GM12878 (cell line): ENCODE measurements at regions of chr18 and their contacts with region 1.

Region 1: DNA sequence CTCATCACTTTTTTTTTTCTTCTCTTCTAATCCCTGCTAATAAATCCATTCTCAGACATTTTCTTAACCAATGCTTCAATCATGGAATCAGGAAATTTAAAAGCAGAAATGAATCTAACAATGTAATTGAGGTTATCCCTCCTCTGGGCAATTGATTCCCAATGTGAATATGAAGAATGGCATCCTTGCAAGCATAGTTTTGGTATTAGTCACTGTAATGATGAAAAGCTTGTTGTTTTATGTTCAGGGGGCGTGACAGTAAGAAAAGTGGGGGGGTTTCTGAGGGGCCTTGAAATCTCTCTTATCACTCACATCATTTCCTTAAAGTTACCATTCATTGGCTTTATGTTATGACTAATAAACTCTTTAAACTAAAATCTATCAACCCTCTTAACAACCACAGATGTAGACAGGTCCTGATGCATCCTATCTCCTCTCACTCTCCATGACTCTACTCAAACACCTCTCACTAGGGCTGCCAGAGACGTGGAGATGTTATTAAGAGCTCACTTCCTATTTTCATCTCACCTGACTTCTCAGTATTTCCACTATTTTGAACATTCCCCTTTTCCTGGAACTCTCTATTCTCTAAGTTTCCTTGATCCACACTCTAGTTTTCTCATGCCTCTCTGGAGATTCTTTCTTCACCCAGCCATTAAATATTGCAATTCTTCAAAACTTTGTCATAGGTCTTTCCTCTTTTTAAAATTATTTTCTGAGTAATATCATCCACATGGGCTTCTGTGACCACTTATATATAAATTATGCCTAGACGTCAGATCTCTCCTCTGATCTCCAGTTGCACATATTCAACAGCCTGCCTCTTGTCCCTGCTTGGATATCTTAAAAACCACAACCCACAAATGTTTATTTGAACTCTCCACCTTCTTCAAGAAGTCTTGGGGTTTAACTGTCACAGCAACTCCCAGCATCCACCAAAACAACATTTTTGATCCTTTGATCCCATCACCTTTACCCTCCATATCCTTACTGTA is 332.9 kb downstream of the CDH2 start:
- DNase-seq: no peak
- ATAC-seq: no peak
- H3K4me3 ChIP-seq: no peak overlapping the region
- H3K27ac ChIP-seq: no peak overlapping the region
- H3K4me1 ChIP-seq: no peaks in the 10 kb centered on the region
- H3K27me3 ChIP-seq: no peaks in the 10 kb centered on the region
- CTCF ChIP-seq: no peak
- EP300 ChIP-seq: no peak
- POLR2A ChIP-seq: no peak
- RAD21 ChIP-seq: no peak

Region 2: DNA sequence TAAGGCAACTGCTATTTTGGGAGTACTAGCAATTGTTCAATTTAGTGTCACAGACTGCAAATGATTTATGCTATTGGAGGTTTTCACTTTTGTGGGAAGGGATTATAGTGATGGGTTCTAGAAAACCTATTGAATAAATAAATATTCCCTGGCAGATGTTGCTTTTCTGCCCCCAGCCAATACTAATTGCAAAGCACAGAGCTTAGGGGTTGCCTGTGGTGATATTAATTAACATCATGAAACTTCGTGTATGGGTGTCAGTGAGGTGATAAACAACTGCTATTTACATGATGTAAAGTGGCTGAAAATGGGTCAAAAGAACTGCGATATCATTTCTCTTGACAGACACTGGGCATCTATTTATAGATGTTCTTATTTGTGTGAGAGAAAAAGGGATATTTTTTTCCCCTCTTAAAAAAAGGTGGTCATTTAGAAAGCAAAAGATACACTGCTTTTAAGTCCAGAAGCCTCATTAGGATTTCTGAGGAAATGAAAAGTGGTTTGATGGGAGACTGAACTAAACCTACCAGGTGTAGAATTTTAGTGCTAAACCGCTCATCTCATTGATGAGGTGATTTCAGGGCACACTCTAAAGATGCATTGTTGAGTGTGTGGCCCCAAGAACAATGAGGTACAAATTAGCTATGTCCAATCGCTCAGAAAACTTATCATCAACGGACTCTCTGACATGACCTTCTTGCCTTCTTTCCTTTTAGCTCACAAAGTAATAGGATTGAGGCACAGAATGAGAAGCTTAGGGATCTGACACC is 542.3 kb before region 1 on chr18:
- CTCF ChIA-PET with region 1: no interaction called
- POLR2A ChIA-PET with region 1: no interaction called
- RAD21 ChIA-PET with region 1: no interaction called
- SMC1A ChIA-PET with region 1: no interaction called
- in situ Hi-C with region 1: no loop called
- intact Hi-C with region 1: no loop called
- DNase-seq: no peak
- ATAC-seq: no peak
- H3K4me3 ChIP-seq: no peak overlapping the region
- H3K27ac ChIP-seq: no peak overlapping the region
- H3K4me1 ChIP-seq: no peaks in the 10 kb centered on the region
- H3K27me3 ChIP-seq: no peaks in the 10 kb centered on the region
- CTCF ChIP-seq: no peak
- EP300 ChIP-seq: no peak
- POLR2A ChIP-seq: no peak
- RAD21 ChIP-seq: no peak

Region 3: DNA sequence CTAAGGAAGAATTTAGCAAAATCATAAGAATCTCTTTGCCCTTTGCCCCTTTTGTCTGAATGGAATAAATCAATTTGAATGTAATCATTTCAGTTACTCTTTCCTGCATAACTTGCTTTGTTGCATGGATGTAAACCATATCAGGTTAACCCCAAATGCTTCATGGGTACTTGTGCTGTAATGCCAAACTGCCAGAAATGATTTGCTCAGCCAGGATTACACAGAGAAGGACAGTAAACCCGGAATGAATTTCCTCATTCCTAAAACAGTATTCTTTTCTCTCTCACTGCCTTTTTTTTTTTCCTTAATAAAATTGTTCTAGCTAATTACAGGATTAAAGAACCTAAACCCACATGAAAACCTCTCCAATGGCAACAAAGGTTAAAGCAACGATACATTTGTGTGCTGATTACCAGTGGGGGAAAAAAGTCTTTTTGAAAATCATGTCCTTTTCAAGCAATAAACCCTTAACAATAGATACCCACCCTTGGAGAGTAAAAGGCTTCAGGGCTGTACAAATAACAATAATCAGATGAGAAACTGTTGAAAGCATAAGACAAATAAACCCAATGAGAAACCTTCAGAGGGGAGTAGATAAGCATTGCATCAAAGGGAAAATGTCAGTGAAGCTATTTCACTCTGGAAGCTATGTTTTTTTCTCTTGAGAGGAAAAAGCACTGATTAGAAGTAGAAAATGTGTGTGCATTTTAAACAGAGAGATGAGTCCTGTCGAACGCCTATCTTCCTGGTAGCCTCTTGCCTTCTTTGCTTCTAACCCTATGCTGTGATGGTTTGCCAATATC is 57.5 kb after region 1 on chr18:
- CTCF ChIA-PET with region 1: no interaction called
- POLR2A ChIA-PET with region 1: no interaction called
- RAD21 ChIA-PET with region 1: no interaction called
- SMC1A ChIA-PET with region 1: no interaction called
- in situ Hi-C with region 1: loop called (anchors 10 kb)
- intact Hi-C with region 1: no loop called
- DNase-seq: no peak
- ATAC-seq: no peak
- H3K4me3 ChIP-seq: no peak overlapping the region
- H3K27ac ChIP-seq: no peak overlapping the region
- H3K4me1 ChIP-seq: no peaks in the 10 kb centered on the region
- H3K27me3 ChIP-seq: no peaks in the 10 kb centered on the region
- CTCF ChIP-seq: no peak
- EP300 ChIP-seq: no peak
- POLR2A ChIP-seq: no peak
- RAD21 ChIP-seq: no peak